ENCODE measurements at regions of chr12 and their contacts with region 1.

Region 1: GRCh38 chr12:68844788-68845695 is 37.1 kb downstream of the MDM2 start:
- DNase-seq: no peak
- H3K4me3 ChIP-seq: no peak overlapping the region
- H3K27ac ChIP-seq: no peak overlapping the region
- H3K27me3 ChIP-seq: no peaks in the 10 kb centered on the region
- CTCF ChIP-seq: no peak

Region 2: DNA sequence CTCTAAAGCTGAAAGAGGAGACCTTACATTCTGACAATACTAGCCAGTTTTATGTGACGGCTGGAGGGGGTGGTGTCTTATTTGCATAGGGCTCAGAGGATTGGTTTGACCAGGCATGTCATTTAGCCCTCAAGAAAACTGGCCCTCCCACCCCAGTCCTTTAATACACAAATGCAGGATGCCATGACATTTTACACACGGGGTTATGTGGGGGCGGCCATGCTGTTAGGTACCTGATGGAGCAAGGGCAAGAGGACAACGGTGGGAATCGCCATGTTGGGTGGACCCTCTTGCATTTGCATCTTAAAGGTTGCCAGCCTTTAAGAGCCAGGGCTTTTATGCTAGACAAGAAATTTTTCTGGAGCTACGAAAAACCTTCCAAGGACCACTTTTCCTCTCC is 13.8 kb before region 1 on chr12:
- CTCF ChIA-PET with region 1: interaction called, 41 read pairs
- POLR2A ChIA-PET with region 1: interaction called, 4 read pairs
- DNase-seq: no peak
- H3K4me3 ChIP-seq: no peak overlapping the region
- H3K27ac ChIP-seq: peak overlapping the region; percentile 11
- H3K27me3 ChIP-seq: no peaks in the 10 kb centered on the region
- CTCF ChIP-seq: no peak

Measured in AG04450 (cell line).